ENCODE measurements at regions of chr10 and their contacts with region 1.

Region 1: GRCh38 chr10:35447693-35448407 is 111.5 kb downstream of the CCNY start:
- DNase-seq: peak; percentile 91
- ATAC-seq: peak; percentile 77
- H3K4me3 ChIP-seq: peak overlapping the region; percentile 13
- H3K27ac ChIP-seq: peak overlapping the region; percentile 23
- H3K4me1 ChIP-seq: peaks cover 24% of the 10 kb centered on the region
- H3K27me3 ChIP-seq: no peaks in the 10 kb centered on the region
- CTCF ChIP-seq: no peak

Region 2: GRCh38 chr10:35421553-35422178 is 26.2 kb before region 1 on chr10:
- CTCF ChIA-PET with region 1: no interaction called
- POLR2A ChIA-PET with region 1: interaction called, 12 read pairs
- intact Hi-C with region 1: no loop called
- DNase-seq: peak; percentile 99
- ATAC-seq: peak; percentile 90
- H3K4me3 ChIP-seq: peak overlapping the region; percentile 37; the same call in 1 of the 2 replicates
- H3K27ac ChIP-seq: peak overlapping the region; percentile 62
- H3K4me1 ChIP-seq: peaks cover 63% of the 10 kb centered on the region
- H3K27me3 ChIP-seq: no peaks in the 10 kb centered on the region
- CTCF ChIP-seq: no peak